Sciatic nerve (tissue), 2 donors: ENCODE measurements at regions of chr19 and their contacts with region 1.

Region 1: DNA sequence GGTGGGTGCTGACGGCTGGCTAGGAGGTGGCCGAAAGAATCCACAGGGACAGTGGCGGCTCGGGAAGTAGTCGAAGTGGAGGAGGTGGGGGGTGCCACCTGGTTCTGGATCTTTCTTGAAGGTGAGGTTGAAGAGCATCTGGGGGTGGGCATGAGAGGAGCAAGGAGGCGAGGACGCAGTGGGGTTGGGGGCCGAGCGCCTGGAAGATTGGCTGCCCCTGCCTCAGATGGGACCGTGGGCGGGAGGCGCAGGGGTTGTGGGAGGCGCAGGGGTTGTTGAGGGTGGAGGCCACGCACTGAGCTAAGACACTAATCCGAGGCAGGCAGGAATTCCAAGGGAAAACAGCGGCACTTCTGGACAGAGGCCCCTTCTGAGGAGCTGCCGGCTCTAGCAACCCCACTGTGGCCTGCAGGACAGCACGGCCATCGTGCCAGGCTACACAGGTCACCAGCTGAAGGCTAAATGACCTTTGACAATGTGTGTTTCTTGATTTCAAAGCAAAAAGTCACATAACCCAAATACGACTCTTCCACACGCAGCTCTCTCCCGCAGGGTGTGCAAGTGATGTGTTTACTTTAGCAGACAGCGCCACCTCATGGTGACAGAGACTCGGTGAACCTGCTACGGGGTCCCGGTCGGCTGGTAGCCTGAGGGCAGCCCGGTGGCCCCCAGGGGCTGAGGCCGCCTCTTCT is 44.1 kb upstream of the RANBP3 start:
- DNase-seq: peak; percentile 90
- ATAC-seq: peak; percentile 91

Region 2: DNA sequence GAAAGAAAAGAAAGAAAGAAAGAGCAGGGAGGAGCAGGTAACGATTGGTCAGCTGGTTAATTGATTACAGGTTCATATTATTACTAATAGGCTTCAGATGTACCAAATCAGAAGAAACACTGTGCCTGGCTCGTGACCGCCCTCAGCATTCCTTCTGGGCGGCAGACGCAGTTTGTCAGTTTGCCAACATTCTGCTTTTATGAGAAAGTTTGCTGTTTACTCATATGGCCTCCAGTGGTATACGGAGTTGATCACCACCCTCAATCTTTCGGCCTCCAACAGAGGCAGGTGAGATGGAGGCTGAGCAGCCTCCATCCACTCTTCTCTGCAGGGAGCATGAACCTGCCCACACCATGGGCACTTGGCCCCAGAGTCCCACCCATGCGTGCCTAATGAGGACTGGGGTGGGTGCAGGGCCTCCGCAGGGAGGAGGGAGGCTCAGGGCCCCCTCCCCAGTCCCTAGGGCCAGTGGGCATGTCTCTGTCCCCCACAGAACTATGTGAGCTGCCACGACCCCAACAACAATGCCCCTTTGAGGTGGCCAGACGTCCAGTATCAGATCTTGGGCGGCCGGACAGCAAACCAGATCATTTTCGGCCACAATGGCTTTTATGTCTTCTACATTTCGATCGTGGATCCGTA is 246.2 kb before region 1 on chr19:
- intact Hi-C with region 1: loop called (anchors 1 kb)
- DNase-seq: no peak
- ATAC-seq: no peak

Region 3: DNA sequence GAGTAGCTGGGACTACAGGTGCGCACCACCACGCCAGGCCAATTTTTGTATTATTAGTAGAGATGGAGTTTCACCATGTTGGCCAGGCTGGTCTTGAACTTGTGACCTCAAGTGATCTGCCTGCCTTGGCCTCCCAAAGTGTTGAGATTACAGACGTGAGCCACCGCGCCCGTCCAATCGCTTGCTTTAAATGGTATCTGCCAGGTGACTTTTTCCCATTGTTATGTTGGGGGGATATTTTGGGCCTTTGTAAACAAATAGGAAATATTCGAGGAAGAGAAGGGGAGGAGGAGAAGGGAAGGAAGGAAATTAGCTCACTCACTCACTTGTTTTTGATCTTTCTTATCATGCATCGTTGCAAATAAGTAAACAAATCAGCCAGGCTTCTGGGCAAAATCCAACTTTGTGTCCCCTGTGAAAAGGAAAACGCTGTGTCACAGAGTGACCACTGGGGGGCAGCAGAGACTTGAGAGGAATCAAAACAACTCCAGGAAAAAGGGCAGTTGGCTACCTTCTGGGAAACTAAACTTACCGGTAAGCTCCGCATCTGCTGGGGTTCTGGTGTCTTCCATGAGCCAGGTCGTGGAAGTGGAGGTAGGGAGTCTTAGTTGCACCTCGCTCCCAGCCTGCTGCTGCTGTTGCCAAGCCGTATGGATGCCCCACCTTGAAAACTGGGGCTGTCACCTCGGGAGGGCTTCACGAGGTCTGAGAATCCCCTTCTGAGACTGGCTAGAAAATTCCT is 34.8 kb before region 1 on chr19:
- intact Hi-C with region 1: loop called (anchors 5 kb)
- DNase-seq: peak; percentile 88
- ATAC-seq: peak; percentile 70

Region 4: GRCh38 chr19:6110360-6110977 is 88.4 kb after region 1 on chr19 and contains the start of gene RFX2:
- intact Hi-C with region 1: no loop called
- DNase-seq: peak; percentile 99
- ATAC-seq: peak; percentile 99
- total RNA-seq, gene RFX2: 12.7 TPM

Region 5: GRCh38 chr19:7550987-7551761 is 1529.2 kb after region 1 on chr19:
- intact Hi-C with region 1: no loop called
- DNase-seq: peak; percentile 74
- ATAC-seq: peak; percentile 93